ENCODE measurements at regions of chr11 and their contacts with region 1.

Region 1: GRCh38 chr11:79406376-79406775 is 34.5 kb downstream of the TENM4 start:
- DNase-seq: no peak
- ATAC-seq: peak; percentile 77
- H3K4me3 Mint-ChIP-seq: peak overlapping the region; percentile 15
- H3K27ac Mint-ChIP-seq: peak overlapping the region; percentile 47
- H3K4me1 Mint-ChIP-seq: peaks cover 12% of the 10 kb centered on the region
- H3K27me3 Mint-ChIP-seq: no peaks in the 10 kb centered on the region
- CTCF ChIP-seq: no peak

Region 2: DNA sequence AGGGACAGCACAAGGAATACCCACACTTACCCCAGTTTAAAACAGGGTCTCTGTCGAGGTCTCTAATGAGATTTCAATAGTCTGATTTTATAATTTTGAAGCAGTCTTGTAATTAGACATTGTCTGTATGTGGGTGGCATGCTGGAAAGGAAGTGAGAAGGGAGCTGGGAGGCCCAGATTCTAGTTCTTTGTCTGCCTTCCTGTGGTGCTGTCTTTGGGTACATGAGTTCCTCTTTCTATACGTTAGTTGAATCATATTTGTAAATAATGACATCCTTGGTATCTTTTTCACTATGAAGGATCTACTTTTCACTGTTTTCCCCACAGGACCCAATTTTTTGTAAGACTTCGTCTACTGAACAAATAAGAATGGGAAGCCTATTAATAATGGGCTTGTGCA is 76.4 kb after region 1 on chr11:
- CTCF ChIA-PET with region 1: interaction called, 5 read pairs
- POLR2A ChIA-PET with region 1: no interaction called
- intact Hi-C with region 1: loop called (anchors 2 kb)
- DNase-seq: no peak
- ATAC-seq: peak; percentile 82
- H3K4me3 Mint-ChIP-seq: peak overlapping the region; percentile 24
- H3K27ac Mint-ChIP-seq: peak overlapping the region; percentile 59
- H3K4me1 Mint-ChIP-seq: peaks cover 24% of the 10 kb centered on the region
- H3K27me3 Mint-ChIP-seq: no peaks in the 10 kb centered on the region
- CTCF ChIP-seq: no peak

Measured in activated B cell treated with CpG ODN at 0.5 μM for 24 hours (primary cell).